Activated CD4-positive, alpha-beta memory T cell treated with anti-CD3 and anti-CD28 coated beads for 36 hours (primary cell): ENCODE measurements at regions of chr3 and their contacts with region 1.

Region 1: GRCh38 chr3:107235928-107236315 is 141.3 kb upstream of the CCDC54 start:
- DNase-seq: peak; percentile 49
- H3K4me3 Mint-ChIP-seq: peak overlapping the region; percentile 20
- H3K27ac Mint-ChIP-seq: no peak overlapping the region
- H3K4me1 Mint-ChIP-seq: peaks cover 6% of the 10 kb centered on the region
- H3K27me3 Mint-ChIP-seq: peaks cover 10% of the 10 kb centered on the region

Region 2: DNA sequence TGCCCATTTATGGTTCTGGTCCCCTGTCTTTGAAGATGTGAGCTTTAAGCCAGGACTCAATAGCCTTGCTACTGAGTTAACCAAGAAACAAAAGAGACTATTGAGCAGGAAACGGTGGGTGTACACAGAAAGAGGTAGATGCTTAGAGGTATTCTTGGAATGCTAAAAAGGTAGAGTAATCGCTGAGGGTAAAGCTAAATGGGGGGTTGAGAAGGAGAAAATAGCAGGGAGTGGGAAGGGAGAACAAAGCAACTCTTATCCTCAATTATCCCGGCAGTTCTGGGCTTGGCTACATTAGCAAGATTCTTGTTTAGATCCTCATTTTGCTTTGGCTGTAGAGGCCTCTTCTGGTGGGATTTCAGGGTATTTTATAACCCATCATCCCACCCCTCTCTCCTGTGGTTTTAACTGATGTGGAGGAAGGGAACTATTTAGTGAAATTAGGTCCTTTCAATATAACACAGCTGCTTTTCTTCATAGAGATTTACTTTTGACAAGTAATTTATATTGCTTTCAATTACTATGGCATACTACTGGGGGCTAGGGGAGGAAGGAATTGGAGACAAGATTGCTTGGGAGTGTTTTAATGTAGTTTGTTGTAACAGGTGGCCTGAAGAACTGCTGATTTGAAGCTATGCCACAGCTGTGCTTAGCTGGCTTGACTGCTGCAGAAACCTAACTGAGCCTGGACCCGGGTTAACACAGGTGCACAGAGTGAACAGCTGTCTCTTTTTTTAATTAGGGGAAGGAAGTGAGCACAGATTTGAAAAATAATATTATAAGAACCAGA is 92.9 kb before region 1 on chr3:
- CTCF ChIA-PET with region 1: no interaction called
- POLR2A ChIA-PET with region 1: no interaction called
- intact Hi-C with region 1: no loop called
- DNase-seq: no peak
- H3K4me3 Mint-ChIP-seq: no peak overlapping the region
- H3K27ac Mint-ChIP-seq: no peak overlapping the region
- H3K4me1 Mint-ChIP-seq: no peaks in the 10 kb centered on the region
- H3K27me3 Mint-ChIP-seq: peaks cover 14% of the 10 kb centered on the region

Region 3: GRCh38 chr3:107224026-107224596 is 11.8 kb before region 1 on chr3:
- CTCF ChIA-PET with region 1: interaction called, 10 read pairs
- POLR2A ChIA-PET with region 1: no interaction called
- intact Hi-C with region 1: no loop called
- DNase-seq: no peak
- H3K4me3 Mint-ChIP-seq: no peak overlapping the region
- H3K27ac Mint-ChIP-seq: no peak overlapping the region
- H3K4me1 Mint-ChIP-seq: no peaks in the 10 kb centered on the region
- H3K27me3 Mint-ChIP-seq: peaks cover 6% of the 10 kb centered on the region

Region 4: DNA sequence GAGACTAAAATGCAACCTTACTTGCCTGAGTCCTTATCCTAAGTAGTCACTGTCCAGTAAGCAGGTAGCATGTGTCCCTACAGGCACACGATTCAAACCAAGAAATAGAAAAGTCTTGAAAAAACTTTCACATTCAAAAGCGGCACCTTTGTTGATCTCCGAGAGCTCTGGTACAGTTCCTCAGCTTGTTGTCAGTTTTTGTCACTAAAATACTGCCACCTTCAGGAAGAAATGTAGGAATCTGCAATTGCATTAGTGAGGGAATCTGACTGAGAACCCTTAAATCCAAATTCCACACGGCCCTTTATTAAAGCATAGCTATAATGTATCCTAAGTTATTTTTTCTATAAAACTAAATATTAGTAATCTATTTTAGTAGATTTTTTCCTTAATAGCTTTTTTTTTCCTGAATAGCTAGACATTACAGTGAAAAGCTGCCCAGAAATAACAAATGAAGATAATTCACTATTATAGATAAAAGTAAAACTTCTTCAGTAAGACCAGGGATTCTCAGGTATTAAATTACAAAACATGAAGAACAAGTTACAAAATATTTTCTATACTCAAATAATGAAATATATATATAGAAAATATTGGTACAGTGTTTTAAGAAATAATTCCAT is 185.4 kb after region 1 on chr3:
- CTCF ChIA-PET with region 1: interaction called, 58 read pairs
- POLR2A ChIA-PET with region 1: no interaction called
- intact Hi-C with region 1: loop called (anchors 1 kb)
- DNase-seq: no peak
- H3K4me3 Mint-ChIP-seq: no peak overlapping the region
- H3K27ac Mint-ChIP-seq: no peak overlapping the region
- H3K4me1 Mint-ChIP-seq: peaks cover 3% of the 10 kb centered on the region
- H3K27me3 Mint-ChIP-seq: peaks cover 4% of the 10 kb centered on the region

Region 5: DNA sequence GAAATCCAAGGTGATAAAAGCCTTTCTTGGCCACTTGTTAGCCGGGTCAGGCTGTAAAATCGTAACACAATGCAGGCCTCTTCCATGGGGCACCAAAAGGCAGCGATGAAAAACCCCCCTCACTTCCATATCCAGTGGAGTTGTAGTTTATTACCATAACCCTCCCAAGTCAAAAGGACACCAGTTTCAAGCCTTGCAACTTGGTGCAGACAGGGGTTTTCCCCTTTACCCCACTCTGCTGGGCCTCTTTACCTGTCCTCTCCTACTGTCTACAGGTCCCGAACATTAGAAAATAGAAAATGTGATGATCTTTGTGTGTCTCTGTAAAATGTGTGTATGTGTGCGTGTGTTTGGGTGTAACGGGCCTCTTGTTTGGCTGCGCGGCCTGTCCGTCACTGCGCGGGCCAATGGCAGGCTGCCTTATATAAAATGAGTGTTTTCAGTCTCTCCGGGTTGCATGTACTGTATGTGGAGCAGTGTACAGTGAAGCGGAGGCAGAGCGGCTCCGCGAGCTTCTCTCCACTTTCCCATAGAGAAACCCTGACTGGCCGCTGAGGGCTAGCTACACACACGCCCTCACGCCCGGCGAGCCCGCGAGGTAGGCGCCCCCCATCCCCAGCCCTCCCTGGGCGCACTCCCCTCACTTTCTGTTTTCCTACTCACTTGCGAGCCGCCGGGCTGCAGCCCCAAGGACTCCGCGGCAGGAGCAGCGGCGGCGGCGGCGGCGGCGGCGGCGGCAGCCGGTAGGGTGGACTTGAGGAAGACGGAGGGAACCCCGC is 286.8 kb after region 1 on chr3 and contains the start of gene BBX:
- CTCF ChIA-PET with region 1: no interaction called
- POLR2A ChIA-PET with region 1: interaction called, 3 read pairs
- intact Hi-C with region 1: loop called (anchors 2 kb)
- DNase-seq: peak; percentile 96
- H3K4me3 Mint-ChIP-seq: peak within 1 kb of the TSS; percentile 94
- H3K27ac Mint-ChIP-seq: peak within 1 kb of the TSS; percentile 95
- H3K4me1 Mint-ChIP-seq: peaks cover 23% of the 10 kb centered on the region
- H3K27me3 Mint-ChIP-seq: no peaks in the 10 kb centered on the region
- total RNA-seq, gene BBX: 39.9 to 40.9 TPM

Region 6: GRCh38 chr3:107598926-107599771 is 363.2 kb after region 1 on chr3:
- CTCF ChIA-PET with region 1: interaction called, 3 read pairs
- POLR2A ChIA-PET with region 1: no interaction called
- intact Hi-C with region 1: loop called (anchors 5 kb)
- DNase-seq: peak; percentile 64
- H3K4me3 Mint-ChIP-seq: peak overlapping the region; percentile 79
- H3K27ac Mint-ChIP-seq: peak overlapping the region; percentile 91
- H3K4me1 Mint-ChIP-seq: peaks cover 58% of the 10 kb centered on the region
- H3K27me3 Mint-ChIP-seq: no peaks in the 10 kb centered on the region

Region 7: DNA sequence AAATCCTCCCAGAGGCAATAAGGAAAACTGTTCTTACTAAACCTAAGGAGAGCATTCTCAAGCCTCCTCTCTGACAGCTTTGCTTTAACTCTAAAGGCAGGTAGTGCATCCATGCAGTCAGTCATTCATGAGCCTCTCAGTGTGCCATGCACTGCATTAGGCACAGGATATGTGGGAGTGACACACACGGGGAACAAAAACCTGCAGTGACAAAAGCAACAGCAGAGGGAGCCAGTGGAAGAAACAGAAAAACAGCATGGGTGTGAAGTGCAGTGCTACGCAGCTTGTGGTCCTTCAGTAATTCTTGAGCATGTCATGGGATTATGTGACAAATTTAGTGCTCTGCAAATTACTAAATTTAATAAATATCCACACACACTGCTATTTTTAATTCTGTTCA is 517.6 kb after region 1 on chr3:
- CTCF ChIA-PET with region 1: interaction called, 3 read pairs
- POLR2A ChIA-PET with region 1: no interaction called
- intact Hi-C with region 1: loop called (anchors 1 kb)
- DNase-seq: peak; percentile 37
- H3K4me3 Mint-ChIP-seq: no peak overlapping the region
- H3K27ac Mint-ChIP-seq: no peak overlapping the region
- H3K4me1 Mint-ChIP-seq: no peaks in the 10 kb centered on the region
- H3K27me3 Mint-ChIP-seq: no peaks in the 10 kb centered on the region

Region 8: GRCh38 chr3:107927361-107928083 is 691.6 kb after region 1 on chr3:
- CTCF ChIA-PET with region 1: interaction called, 6 read pairs
- POLR2A ChIA-PET with region 1: no interaction called
- intact Hi-C with region 1: loop called (anchors 1 kb)
- DNase-seq: peak; percentile 81
- H3K4me3 Mint-ChIP-seq: peak overlapping the region; percentile 72
- H3K27ac Mint-ChIP-seq: no peak overlapping the region
- H3K4me1 Mint-ChIP-seq: peaks cover 10% of the 10 kb centered on the region
- H3K27me3 Mint-ChIP-seq: peaks cover 5% of the 10 kb centered on the region